ENCODE measurements at regions of chr14 and their contacts with region 1.

Region 1: DNA sequence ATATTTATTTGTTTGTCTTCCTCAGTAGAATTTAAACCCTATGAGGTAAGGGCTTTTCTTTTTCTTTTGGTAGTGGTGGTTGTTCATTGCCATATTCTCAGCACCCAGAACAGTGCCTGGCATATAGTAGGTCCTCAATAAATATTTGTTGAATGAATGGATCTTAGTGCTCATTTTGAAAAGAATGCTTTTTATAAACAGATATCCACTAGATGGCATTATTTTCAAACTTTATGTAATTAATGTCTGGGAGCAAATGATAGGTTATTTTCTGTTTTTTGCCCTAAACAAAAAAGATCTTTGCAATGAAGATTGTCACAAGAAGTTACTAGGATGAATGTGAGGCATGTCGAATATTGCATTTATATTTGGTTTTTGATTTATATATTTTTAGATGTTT is 64.1 kb downstream of the RAD51B start:
- DNase-seq: no peak
- H3K4me3 ChIP-seq: no peak overlapping the region
- H3K27me3 ChIP-seq: no peaks in the 10 kb centered on the region
- CTCF ChIP-seq: peak; percentile 13; the same call in 1 of the 2 replicates

Region 2: GRCh38 chr14:67749341-67750084 is 134.2 kb before region 1 on chr14:
- CTCF ChIA-PET with region 1: no interaction called
- POLR2A ChIA-PET with region 1: no interaction called
- DNase-seq: no peak
- H3K4me3 ChIP-seq: no peak overlapping the region
- H3K27me3 ChIP-seq: no peaks in the 10 kb centered on the region
- CTCF ChIP-seq: no peak

Region 3: GRCh38 chr14:68824517-68825347 is 941.0 kb after region 1 on chr14:
- CTCF ChIA-PET with region 1: interaction called, 10 read pairs
- POLR2A ChIA-PET with region 1: no interaction called
- DNase-seq: no peak
- H3K4me3 ChIP-seq: no peak overlapping the region
- H3K27me3 ChIP-seq: no peaks in the 10 kb centered on the region
- CTCF ChIP-seq: peak; percentile 94

Measured in BJ (cell line).